Gastrocnemius medialis (tissue), 4 donors: ENCODE measurements at regions of chr3 and their contacts with region 1.

Region 1: DNA sequence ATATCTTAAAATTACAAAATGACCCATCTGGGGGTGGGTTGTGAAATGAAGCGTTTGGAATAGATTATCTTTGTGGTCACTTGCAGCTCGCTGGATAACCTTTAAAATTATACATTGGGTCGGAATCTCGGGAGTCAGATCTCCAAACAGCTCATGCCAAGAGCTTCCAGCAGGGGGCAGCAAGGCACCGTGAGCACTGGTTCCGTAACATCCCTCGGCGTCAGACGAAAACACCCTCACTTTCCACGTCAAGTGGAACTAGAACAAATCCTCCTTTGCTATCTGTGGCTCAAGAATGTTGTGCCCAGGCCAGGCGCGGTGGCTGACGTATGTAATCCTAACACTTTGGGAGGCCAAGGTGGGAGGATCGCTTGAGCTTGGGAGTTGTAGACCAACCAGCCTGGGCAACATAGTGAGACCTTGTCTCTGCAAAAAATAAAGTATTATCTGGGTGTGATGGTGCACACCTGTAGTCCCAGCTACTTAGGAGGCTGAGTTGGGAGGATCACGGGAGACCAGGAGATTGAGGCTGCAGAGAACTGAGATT is 31.1 kb downstream of the UMPS start:
- DNase-seq: peak; percentile 57 to 76
- ATAC-seq: peak; percentile 87 to 93
- H3K4me3 ChIP-seq: no peak overlapping the region
- H3K27ac ChIP-seq: peak overlapping the region; percentile 1 to 39 (median 16)
- H3K4me1 ChIP-seq: peaks cover 6 to 7% of the 10 kb centered on the region in 2 donors
- H3K27me3 ChIP-seq: no peaks in the 10 kb centered on the region
- CTCF ChIP-seq: peak; percentile 95 to 99 (median 97)
- POLR2A ChIP-seq: no peak

Region 2: DNA sequence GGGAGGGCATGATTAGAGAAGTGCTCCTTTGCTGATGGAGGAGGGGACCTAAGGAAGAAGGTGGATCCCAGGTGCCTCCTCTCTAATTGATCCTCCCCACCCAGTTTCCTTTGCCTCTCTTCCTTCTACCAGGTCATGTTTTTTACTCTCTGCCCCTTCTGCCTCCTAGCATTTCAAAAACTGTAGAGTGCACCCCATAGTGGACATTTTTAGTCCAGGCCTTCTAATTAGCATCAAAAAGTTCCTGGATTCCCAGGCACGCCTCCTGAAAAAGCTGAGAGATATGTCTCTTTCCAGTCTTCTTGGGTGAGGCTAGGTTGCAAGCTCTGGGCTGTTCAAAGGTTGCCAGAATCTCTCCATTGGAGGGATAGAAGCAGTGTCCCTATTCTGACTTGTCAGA is 144.5 kb after region 1 on chr3:
- in situ Hi-C with region 1: loop called (anchors 5 kb)
- intact Hi-C with region 1: loop called (anchors 1 kb)
- DNase-seq: no peak
- ATAC-seq: no peak
- H3K4me3 ChIP-seq: no peak overlapping the region
- H3K27ac ChIP-seq: no peak overlapping the region
- H3K4me1 ChIP-seq: no peaks in the 10 kb centered on the region
- H3K27me3 ChIP-seq: no peaks in the 10 kb centered on the region
- CTCF ChIP-seq: no peak
- POLR2A ChIP-seq: no peak

Region 3: DNA sequence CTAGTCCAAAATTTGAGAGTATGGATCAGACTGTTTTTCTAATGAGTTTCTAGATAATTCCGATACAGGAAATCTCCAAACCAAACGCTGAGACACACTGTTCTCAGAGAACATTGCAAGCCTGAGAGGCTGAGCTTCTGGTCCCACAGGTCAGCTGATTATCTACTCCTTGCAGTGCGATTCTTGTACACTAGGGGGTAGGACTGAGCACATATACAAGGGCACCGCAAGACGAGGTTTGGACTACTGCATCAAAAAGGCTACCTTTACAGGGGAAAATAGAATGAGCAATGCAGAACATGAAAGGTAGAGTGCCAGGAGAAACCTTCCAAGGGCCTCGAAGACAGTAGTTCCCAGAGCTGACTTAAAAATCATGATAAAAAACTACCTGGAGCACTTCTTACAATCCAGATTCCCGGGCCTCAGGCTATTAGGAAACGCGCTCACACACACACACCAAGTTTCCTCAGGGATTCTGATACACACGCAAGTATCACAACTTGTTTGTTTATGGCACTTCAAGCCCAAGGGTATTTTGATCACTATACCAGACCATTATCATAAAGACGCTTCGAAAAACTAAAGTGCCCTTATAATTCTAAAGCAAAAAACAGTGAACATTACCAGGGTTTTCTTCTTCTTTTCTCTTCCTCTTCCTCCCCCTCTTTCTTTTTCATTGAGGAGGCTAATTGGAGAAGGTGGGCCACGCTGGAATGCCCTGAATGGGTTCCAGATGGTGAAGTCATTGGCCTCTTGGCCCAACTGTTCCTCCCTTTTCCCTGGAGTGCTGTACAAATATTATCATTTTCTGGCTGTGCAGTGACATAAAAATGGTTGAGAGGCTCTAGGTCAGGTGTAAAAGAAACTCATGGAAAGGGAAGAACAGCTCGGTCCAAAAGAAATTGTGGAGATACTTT is 389.5 kb after region 1 on chr3:
- in situ Hi-C with region 1: loop called in 1 of 4 experiments (anchors 25 kb)
- intact Hi-C with region 1: no loop called
- DNase-seq: no peak
- ATAC-seq: peak in 1 of 2 donors; percentile 54
- H3K4me3 ChIP-seq: no peak overlapping the region
- H3K27ac ChIP-seq: no peak overlapping the region
- H3K4me1 ChIP-seq: peaks cover 5 to 6% of the 10 kb centered on the region in 2 donors
- H3K27me3 ChIP-seq: no peaks in the 10 kb centered on the region
- CTCF ChIP-seq: peak in 4 of 5 experiments; percentile 14 to 47 (median 32)
- POLR2A ChIP-seq: no peak